Head of caudate nucleus (tissue), 42 donors: ENCODE measurements at regions of chr4 and their contacts with region 1.

Region 1: GRCh38 chr4:186297013-186297645 is 31.1 kb downstream of the F11 start:
- DNase-seq: peak in 3 of 42 donors; percentile 5 to 43 (median 6)

Region 2: GRCh38 chr4:186570193-186570996 is 273.3 kb after region 1 on chr4:
- intact Hi-C with region 1: no loop called
- DNase-seq: peak in 19 of 42 donors; percentile 18 to 60 (median 39)

Region 3: GRCh38 chr4:186587416-186588018 is 290.4 kb after region 1 on chr4:
- intact Hi-C with region 1: loop called (anchors 5 kb)
- DNase-seq: peak; percentile 42 to 93 (median 80)